ENCODE measurements at regions of chr6 and their contacts with region 1.

Region 1: GRCh38 chr6:149028767-149029405 is 282.1 kb downstream of the UST start:
- DNase-seq: peak; percentile 87
- H3K4me3 Mint-ChIP-seq: no peak overlapping the region
- H3K27ac Mint-ChIP-seq: peak overlapping the region; percentile 57
- H3K4me1 Mint-ChIP-seq: peaks cover 46% of the 10 kb centered on the region
- H3K27me3 Mint-ChIP-seq: no peaks in the 10 kb centered on the region

Region 2: GRCh38 chr6:148746363-148747144 is 282.3 kb before region 1 on chr6 and contains the start of gene UST:
- CTCF ChIA-PET with region 1: no interaction called
- intact Hi-C with region 1: loop called (anchors 5 kb)
- DNase-seq: peak; percentile 73
- H3K4me3 Mint-ChIP-seq: peak within 1 kb of the TSS; percentile 83
- H3K27ac Mint-ChIP-seq: peak within 1 kb of the TSS; percentile 25
- H3K4me1 Mint-ChIP-seq: peaks cover 13% of the 10 kb centered on the region
- H3K27me3 Mint-ChIP-seq: peaks cover 48% of the 10 kb centered on the region
- total RNA-seq, gene UST: 0.20 to 0.74 TPM

Region 3: DNA sequence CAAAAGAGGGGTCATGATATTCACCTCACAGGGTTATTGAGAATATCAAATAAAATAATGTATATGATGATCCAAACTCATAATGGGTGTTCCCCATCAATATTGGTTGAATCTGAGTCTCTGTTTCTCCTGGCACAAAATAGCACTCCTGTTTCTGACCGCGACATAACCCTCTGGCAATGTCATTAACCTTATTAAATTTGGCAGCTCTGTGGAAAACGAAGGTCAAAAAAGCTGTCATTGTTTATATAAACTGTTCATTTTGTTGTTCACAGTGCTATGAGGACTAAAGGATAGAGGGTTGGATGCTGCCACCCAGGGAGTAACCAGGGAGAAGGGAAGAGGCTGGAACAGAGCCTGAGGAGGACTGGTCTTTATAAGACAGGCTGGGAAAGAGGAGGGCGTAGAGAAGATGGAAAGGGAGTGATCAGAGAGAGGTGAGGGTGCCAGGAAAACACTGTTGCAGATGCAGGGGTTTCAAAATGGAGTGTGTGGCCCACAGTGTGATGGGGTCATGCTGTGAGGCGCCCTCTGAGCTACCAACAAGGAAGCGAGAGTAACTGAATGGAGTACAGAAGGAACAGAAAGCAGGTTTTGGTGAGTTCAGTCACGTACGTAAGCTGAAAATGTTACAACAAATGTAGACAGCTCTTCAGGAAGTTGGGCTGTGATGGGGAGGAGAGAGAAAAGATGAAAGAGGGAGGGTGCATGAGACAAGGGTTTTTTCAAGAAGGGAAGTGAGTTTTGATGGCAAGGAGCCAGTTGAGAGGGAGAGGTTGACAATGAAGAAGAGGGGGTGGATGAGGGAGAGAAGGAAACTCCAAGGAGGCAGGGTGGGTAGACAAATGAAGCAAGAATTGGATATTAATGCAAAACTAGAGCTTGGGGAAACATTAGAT is 37.0 kb after region 1 on chr6:
- CTCF ChIA-PET with region 1: interaction called, 24 read pairs
- intact Hi-C with region 1: loop called (anchors 1 kb)
- DNase-seq: peak; percentile 66
- H3K4me3 Mint-ChIP-seq: peak overlapping the region; percentile 39
- H3K27ac Mint-ChIP-seq: peak overlapping the region; percentile 93
- H3K4me1 Mint-ChIP-seq: peaks cover 29% of the 10 kb centered on the region
- H3K27me3 Mint-ChIP-seq: no peaks in the 10 kb centered on the region

Region 4: GRCh38 chr6:149147938-149148718 is 119.2 kb after region 1 on chr6:
- CTCF ChIA-PET with region 1: interaction called, 3 read pairs
- intact Hi-C with region 1: loop called (anchors 1 kb)
- DNase-seq: peak; percentile 27
- H3K4me3 Mint-ChIP-seq: no peak overlapping the region
- H3K27ac Mint-ChIP-seq: peak overlapping the region; percentile 56
- H3K4me1 Mint-ChIP-seq: peaks cover 58% of the 10 kb centered on the region
- H3K27me3 Mint-ChIP-seq: no peaks in the 10 kb centered on the region

Region 5: GRCh38 chr6:149335924-149336608 is 307.2 kb after region 1 on chr6:
- CTCF ChIA-PET with region 1: no interaction called
- intact Hi-C with region 1: loop called (anchors 1 kb)
- DNase-seq: peak; percentile 84
- H3K4me3 Mint-ChIP-seq: peak overlapping the region; percentile 59
- H3K27ac Mint-ChIP-seq: peak overlapping the region; percentile 97
- H3K4me1 Mint-ChIP-seq: peaks cover 82% of the 10 kb centered on the region
- H3K27me3 Mint-ChIP-seq: no peaks in the 10 kb centered on the region

Region 6: GRCh38 chr6:149508485-149508884 is 479.6 kb after region 1 on chr6:
- CTCF ChIA-PET with region 1: interaction called, 4 read pairs
- intact Hi-C with region 1: loop called (anchors 2 kb)
- DNase-seq: peak; percentile 72
- H3K4me3 Mint-ChIP-seq: no peak overlapping the region
- H3K27ac Mint-ChIP-seq: peak overlapping the region; percentile 91
- H3K4me1 Mint-ChIP-seq: peaks cover 57% of the 10 kb centered on the region
- H3K27me3 Mint-ChIP-seq: no peaks in the 10 kb centered on the region

Region 7: GRCh38 chr6:149863697-149864577 is 835.1 kb after region 1 on chr6 and contains the start of gene LRP11:
- CTCF ChIA-PET with region 1: no interaction called
- intact Hi-C with region 1: loop called (anchors 2 kb)
- DNase-seq: peak; percentile 80
- H3K4me3 Mint-ChIP-seq: peak within 1 kb of the TSS; percentile 80
- H3K27ac Mint-ChIP-seq: no peak within 1 kb of the TSS
- H3K4me1 Mint-ChIP-seq: peaks cover 6% of the 10 kb centered on the region
- H3K27me3 Mint-ChIP-seq: peaks cover 12% of the 10 kb centered on the region
- total RNA-seq, gene LRP11: 4.6 to 4.7 TPM

Measured in activated naive CD4-positive, alpha-beta T cell treated with anti-CD3 and anti-CD28 coated beads for 36 hours (primary cell).